Endothelial cell of umbilical vein (primary cell): ENCODE measurements at regions of chr1 and their contacts with region 1.

Region 1: GRCh38 chr1:151327223-151327902 is at the start of gene PI4KB:
- DNase-seq: peak; percentile 98
- H3K4me3 ChIP-seq: peak within 1 kb of the TSS; percentile 63 to 86 (median 83)
- H3K27ac ChIP-seq: peak within 1 kb of the TSS; percentile 93
- H3K4me1 ChIP-seq: peaks cover 22% of the 10 kb centered on the region
- H3K27me3 ChIP-seq: no peaks in the 10 kb centered on the region
- CTCF ChIP-seq: no peak
- POLR2A ChIP-seq: peak; percentile 68
- total RNA-seq, gene PI4KB: 58.3 and 60.9 TPM in 2 replicates

Region 2: GRCh38 chr1:151130987-151131586 is 196.3 kb before region 1 on chr1:
- CTCF ChIA-PET with region 1: no interaction called
- POLR2A ChIA-PET with region 1: no interaction called
- dilution Hi-C with region 1: no loop called
- intact Hi-C with region 1: no loop called
- DNase-seq: peak; percentile 81
- H3K4me3 ChIP-seq: peak overlapping the region in 1 of 3 experiments; percentile 10
- H3K27ac ChIP-seq: no peak overlapping the region
- H3K4me1 ChIP-seq: peaks cover 6% of the 10 kb centered on the region
- H3K27me3 ChIP-seq: no peaks in the 10 kb centered on the region
- CTCF ChIP-seq: no peak
- POLR2A ChIP-seq: peak; percentile 35

Region 3: GRCh38 chr1:151227634-151228033 is 99.7 kb before region 1 on chr1:
- CTCF ChIA-PET with region 1: no interaction called
- POLR2A ChIA-PET with region 1: no interaction called
- dilution Hi-C with region 1: no loop called
- intact Hi-C with region 1: no loop called
- DNase-seq: no peak
- H3K4me3 ChIP-seq: no peak overlapping the region
- H3K27ac ChIP-seq: no peak overlapping the region
- H3K4me1 ChIP-seq: no peaks in the 10 kb centered on the region
- H3K27me3 ChIP-seq: no peaks in the 10 kb centered on the region
- CTCF ChIP-seq: no peak
- POLR2A ChIP-seq: no peak

Region 4: DNA sequence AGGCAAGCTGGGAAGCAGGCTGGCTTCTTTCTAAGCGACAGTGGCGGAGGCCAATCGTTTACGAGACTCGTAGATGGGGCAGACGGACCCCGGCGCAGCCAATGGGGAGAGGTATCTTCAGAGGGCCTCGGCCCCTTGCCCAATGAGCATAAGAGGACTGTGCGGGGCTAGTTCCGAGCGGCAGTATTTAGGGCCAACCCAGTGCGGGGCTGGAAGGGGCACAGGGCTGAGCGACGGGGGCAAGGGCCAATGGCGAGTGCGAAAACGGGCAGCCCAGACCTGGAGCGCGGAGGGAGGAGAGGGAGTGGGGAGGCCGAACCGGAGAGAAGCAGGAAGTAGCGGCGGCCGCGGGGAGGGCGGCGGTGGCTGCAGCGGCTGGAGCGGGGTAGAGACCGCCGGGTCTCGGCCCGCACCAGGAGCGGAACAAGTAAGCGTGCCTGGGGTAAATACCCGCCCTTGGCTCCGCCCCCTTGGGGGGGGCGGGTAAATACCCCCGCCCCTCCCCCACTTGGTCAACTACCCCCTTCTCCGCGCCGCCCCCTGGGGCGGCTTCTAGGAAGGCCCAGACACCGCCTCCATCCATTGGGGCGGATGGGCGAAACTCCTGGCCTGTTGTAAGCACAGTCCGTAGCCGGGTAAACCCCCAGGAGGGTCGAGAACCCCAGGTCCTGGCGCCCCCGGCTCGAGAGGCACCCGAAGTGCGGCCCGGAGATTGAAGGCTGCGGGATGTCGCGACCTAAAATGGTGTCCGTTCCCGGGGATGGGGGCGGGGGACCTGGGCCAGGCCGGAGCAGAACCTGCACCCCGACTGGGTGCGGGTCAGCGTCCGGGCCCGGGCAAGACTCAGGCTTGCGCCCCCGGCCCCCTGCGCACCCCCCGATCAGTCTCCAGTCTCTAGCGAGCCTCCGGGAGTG is 45.1 kb before region 1 on chr1 and contains the start of gene ZNF687:
- CTCF ChIA-PET with region 1: interaction called, 5 read pairs
- POLR2A ChIA-PET with region 1: interaction called, 3 read pairs
- dilution Hi-C with region 1: no loop called
- intact Hi-C with region 1: loop called (anchors 2 kb)
- DNase-seq: peak; percentile 100
- H3K4me3 ChIP-seq: peak within 1 kb of the TSS; percentile 66 to 89 (median 69)
- H3K27ac ChIP-seq: peak within 1 kb of the TSS; percentile 81
- H3K4me1 ChIP-seq: peaks cover 9% of the 10 kb centered on the region
- H3K27me3 ChIP-seq: peaks cover 0 to 2% of the 10 kb centered on the region in 2 experiments
- CTCF ChIP-seq: no peak
- POLR2A ChIP-seq: peak; percentile 76
- total RNA-seq, gene ZNF687: 15.5 and 17.9 TPM in 2 replicates

Region 5: DNA sequence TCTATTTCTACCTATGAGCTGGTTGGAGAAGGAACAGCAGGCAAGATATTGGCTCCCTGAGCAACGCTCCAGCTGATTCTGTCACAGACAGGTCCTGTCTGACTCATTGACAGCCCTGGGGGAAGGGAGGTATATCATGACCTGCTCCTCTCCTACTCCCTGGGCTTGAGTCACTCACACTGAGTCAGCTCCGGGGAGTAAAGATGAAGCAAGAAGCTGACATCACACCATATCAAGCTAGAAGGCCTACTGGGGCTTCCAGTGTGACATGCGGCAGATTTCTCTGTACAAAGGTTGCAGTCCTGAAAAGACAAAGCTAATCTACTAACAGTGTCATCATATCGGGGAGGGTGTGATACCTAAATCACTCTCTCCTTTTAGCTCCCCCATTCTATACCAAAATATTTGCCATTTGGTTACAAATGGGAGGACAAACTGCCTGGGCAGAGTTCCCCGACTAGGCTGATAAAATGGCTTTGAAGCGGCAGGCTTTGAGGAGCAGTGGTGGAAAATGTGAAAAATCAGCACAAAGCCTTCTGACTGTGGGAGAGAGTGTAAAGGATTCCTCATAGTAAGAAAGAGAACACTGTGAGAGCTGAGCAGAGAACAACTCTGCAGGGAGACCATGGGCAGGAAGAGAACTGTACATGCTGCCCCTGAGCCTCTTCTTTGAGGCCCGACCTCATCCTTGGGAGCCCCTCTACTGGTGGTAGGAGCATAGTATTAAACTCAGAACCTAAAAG is 15.6 kb before region 1 on chr1:
- CTCF ChIA-PET with region 1: interaction called, 674 read pairs
- POLR2A ChIA-PET with region 1: interaction called, 11 read pairs
- dilution Hi-C with region 1: no loop called
- intact Hi-C with region 1: loop called (anchors 1 kb)
- DNase-seq: peak; percentile 86
- H3K4me3 ChIP-seq: no peak overlapping the region
- H3K27ac ChIP-seq: peak overlapping the region; percentile 81
- H3K4me1 ChIP-seq: peaks cover 37% of the 10 kb centered on the region
- H3K27me3 ChIP-seq: no peaks in the 10 kb centered on the region
- CTCF ChIP-seq: no peak
- POLR2A ChIP-seq: no peak

Region 6: GRCh38 chr1:151364996-151365395 is 37.6 kb after region 1 on chr1:
- CTCF ChIA-PET with region 1: no interaction called
- POLR2A ChIA-PET with region 1: no interaction called
- dilution Hi-C with region 1: no loop called
- intact Hi-C with region 1: no loop called
- DNase-seq: no peak
- H3K4me3 ChIP-seq: no peak overlapping the region
- H3K27ac ChIP-seq: no peak overlapping the region
- H3K4me1 ChIP-seq: no peaks in the 10 kb centered on the region
- H3K27me3 ChIP-seq: no peaks in the 10 kb centered on the region
- CTCF ChIP-seq: no peak
- POLR2A ChIP-seq: no peak